Left ventricle myocardium superior (tissue), 1 donor: ENCODE measurements at regions of chr19 and their contacts with region 1.

Region 1: GRCh38 chr19:42132851-42133528 is 744 bp upstream of the POU2F2 start:
- DNase-seq: peak; percentile 84
- ATAC-seq: peak; percentile 86

Region 2: GRCh38 chr19:42184401-42184861 is 51.4 kb after region 1 on chr19:
- intact Hi-C with region 1: loop called (anchors 10 kb)
- DNase-seq: peak; percentile 81
- ATAC-seq: peak; percentile 84

Region 3: DNA sequence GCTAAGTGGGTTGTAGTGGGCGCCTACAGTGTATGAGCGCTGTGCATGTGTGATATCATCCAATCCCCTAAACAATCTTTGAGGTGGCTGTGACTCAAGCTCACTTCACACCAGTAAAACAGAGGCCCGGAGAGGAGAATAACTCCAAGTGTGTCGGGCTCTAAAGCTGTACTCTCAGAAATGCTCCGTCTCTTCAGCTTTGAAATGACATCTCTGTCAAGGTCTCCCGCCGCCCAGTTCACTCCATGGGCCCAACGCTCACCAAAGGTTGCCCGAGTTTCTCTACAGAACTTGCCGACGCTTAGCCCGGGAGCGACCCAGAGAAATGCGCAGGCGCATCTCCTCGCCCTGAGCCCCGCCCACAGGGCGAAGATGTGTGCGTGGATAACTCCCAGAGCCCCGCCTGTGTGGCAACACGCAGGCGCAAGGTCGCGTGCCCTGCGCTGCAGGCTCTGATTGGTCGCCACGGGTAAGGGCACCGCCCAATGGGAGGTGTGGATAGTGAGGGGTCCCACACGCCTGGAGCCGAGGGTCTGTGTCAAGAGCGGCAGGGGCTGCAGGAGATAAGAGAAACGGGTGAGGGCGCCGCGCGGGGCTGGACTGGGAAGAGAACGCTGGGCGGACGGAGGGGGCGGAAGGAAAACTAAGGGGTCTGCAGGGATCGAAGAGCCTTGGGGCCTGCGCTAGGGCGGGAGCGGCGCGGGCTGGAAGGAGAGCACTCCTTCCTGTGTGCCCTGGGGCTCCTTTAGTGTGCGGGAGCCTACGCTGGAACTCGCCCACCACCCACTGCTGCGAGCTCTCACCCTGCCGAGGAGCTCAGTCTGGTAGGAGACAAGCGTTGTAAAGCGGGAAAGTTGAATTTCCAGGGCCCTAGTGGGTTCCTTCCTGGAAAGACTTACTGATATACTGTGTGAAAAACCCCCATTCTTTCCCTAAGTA is 87.1 kb after region 1 on chr19 and contains the start of gene ZNF526:
- intact Hi-C with region 1: no loop called
- DNase-seq: peak; percentile 99
- ATAC-seq: peak; percentile 89
- total RNA-seq, gene ZNF526: 6.7 TPM